ENCODE measurements at regions of chr12 and their contacts with region 1.

Region 1: DNA sequence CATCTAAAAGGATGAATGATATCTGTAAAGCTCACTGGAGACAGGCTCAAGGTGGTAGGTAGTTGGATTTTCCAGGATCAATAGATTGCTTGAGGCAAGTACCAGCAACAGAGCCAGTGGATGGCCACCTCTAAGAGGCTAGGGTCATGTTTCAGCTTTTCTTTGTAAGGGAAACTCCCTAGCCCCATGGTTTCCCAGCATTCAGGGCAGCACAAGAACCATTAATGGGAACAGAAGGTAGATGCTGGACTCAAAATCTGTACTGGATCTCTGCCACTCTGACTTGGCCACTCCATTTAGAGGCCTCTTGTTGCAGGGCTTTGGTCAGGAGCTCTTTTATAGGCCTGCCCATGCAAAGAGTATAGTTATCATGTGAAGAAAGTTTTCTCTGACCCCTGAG is 76.1 kb upstream of the DYRK2 start:
- DNase-seq: no peak

Region 2: GRCh38 chr12:67048366-67048765 is 524.1 kb before region 1 on chr12:
- intact Hi-C with region 1: loop called in 1 of 2 experiments (anchors 5 kb)
- DNase-seq: no peak

Region 3: GRCh38 chr12:67534681-67535080 is 37.8 kb before region 1 on chr12:
- intact Hi-C with region 1: no loop called
- DNase-seq: peak; percentile 78

Region 4: DNA sequence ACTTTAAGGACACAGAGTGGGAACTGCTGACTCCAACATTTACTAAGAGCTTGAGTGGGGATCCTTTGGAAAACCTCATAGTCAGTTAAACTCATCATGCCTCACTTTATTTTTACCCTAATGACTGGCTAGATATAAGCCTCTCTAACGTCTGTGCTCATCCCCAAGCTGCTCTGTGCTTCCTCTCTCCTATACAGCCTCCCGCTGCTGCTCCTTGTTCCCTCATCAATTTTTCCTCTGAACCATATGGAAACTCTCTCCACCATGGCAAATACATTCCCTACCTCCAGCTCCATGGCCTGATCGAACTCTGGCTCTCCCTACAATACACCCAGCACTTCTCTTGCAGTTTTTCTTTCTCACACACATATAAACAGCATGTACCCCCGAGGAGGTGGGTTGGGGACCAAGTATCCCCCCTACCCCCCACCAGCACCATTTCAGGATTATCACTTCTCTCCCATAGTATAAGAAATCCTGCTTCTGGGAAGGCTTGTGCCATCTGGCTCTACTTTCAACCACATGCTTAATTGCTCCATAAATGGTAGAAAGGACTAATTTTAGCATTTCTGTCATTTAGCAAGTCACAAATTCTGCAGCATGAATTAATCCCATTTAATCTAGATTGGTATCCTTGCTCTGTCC is 36.9 kb after region 1 on chr12:
- intact Hi-C with region 1: no loop called
- DNase-seq: no peak

Region 5: DNA sequence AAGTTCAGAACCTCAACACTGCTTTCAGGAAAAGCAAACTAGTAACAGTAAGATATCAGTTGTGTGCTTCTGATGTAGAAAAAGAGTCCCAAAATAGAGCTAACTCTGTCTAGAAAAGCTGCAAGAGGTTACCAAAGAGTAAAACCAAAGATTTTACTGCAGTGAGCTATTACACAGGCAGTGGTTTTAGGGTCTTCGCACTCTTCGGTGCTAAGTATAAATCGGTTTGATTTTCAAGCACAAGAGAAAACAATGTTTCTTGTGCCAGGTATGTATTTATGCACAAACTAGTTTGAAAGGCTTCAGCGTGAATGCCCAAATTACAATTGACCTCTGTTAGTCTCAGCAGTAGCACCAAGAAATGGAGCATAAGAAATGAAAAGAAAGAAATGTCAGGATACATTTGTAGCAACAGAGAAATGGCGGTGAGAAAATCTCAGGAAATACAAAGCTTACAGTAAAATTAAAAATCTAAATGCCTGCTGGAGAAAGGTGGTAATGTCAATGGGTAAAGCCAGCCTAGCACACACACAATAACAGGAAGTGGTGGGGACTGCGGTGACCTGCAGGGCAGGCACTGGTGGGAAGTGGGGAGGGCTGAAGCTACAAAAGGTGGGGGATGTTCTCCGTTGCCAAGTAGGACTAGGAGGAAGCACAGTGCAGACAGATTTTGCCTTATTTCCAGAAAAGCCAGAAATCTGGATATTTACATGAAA is 58.0 kb after region 1 on chr12:
- intact Hi-C with region 1: no loop called
- DNase-seq: no peak